Endothelial cell of umbilical vein (primary cell): ENCODE measurements at regions of chr17 and their contacts with region 1.

Region 1: GRCh38 chr17:8091033-8091687 is 3.6 kb upstream of the ALOX12B start:
- DNase-seq: no peak
- H3K4me3 ChIP-seq: no peak overlapping the region
- H3K27ac ChIP-seq: no peak overlapping the region
- H3K4me1 ChIP-seq: no peaks in the 10 kb centered on the region
- H3K27me3 ChIP-seq: peaks cover 2 to 12% of the 10 kb centered on the region in 2 experiments
- CTCF ChIP-seq: no peak
- POLR2A ChIP-seq: no peak

Region 2: GRCh38 chr17:8079291-8080207 is 11.6 kb before region 1 on chr17:
- CTCF ChIA-PET with region 1: interaction called, 37 read pairs
- POLR2A ChIA-PET with region 1: no interaction called
- dilution Hi-C with region 1: no loop called
- intact Hi-C with region 1: no loop called
- DNase-seq: peak; percentile 46
- H3K4me3 ChIP-seq: peak overlapping the region in 2 of 3 experiments; percentile 20 to 32
- H3K27ac ChIP-seq: no peak overlapping the region
- H3K4me1 ChIP-seq: peaks cover 6% of the 10 kb centered on the region
- H3K27me3 ChIP-seq: peaks cover 17 to 23% of the 10 kb centered on the region in 2 experiments
- CTCF ChIP-seq: peak; percentile 83 to 91
- POLR2A ChIP-seq: no peak

Region 3: DNA sequence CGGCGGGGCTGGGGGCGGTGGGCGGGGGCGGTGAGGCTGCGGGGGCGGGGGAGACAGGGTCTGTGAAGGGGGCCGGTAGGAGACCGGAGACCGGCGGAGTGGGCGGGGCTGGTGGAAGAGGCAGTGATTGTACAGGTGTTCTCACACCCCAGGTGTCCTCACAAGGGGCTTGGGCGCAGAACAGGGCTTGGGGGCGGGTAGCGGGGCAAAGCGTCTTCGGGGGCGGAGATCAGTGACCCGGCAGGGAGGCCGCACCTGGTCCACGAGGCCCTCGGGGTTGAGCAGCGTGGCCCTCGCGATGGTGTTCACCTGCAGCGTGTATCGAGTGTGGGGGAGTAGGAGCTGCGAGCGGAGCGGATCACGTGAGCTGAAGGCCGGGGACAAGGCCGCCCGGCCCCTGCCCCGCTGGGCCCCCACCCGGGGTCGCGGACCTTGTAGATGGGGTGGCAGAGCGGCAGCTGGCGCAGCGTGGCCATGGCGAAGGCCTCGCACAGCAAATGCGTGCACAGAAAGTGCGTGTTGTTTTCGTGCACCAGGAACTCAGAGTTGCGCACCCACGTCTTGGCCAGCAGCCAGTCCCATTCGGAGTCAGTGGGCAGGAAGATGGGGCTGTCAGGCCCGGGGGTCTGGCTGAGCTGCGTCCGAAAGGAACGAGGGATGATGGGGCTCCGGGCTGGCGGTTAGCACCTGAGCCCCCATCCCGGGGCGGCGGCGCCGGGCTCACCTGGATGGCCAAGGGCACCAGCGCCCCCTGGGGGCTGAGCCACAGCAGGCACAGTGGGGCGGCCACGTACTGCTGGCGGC is 18.7 kb after region 1 on chr17:
- CTCF ChIA-PET with region 1: interaction called, 167 read pairs
- POLR2A ChIA-PET with region 1: no interaction called
- dilution Hi-C with region 1: no loop called
- intact Hi-C with region 1: no loop called
- DNase-seq: peak; percentile 28
- H3K4me3 ChIP-seq: no peak overlapping the region
- H3K27ac ChIP-seq: no peak overlapping the region
- H3K4me1 ChIP-seq: no peaks in the 10 kb centered on the region
- H3K27me3 ChIP-seq: peaks cover 13 to 21% of the 10 kb centered on the region in 2 experiments
- CTCF ChIP-seq: peak; percentile 92 to 93
- POLR2A ChIP-seq: no peak